Mucosa of descending colon (tissue), 3 donors: ENCODE measurements at regions of chr5 and their contacts with region 1.

Region 1: GRCh38 chr5:179907570-179908324 is at the start of gene TBC1D9B:
- DNase-seq: peak; percentile 57 to 82 (median 80)
- ATAC-seq: peak; percentile 96
- H3K4me3 ChIP-seq: peak within 1 kb of the TSS; percentile 32
- H3K4me1 ChIP-seq: peaks cover 6% of the 10 kb centered on the region
- CTCF ChIP-seq: peak; percentile 75
- total RNA-seq, gene TBC1D9B: 115 to 117 (median 116) TPM

Region 2: GRCh38 chr5:179763215-179763945 is 144.4 kb before region 1 on chr5:
- intact Hi-C with region 1: loop called in 1 of 2 experiments (anchors 5 kb)
- DNase-seq: peak in 2 of 3 donors; percentile 49 to 80
- ATAC-seq: peak; percentile 86
- H3K4me3 ChIP-seq: no peak overlapping the region
- H3K4me1 ChIP-seq: peaks cover 26% of the 10 kb centered on the region
- CTCF ChIP-seq: peak; percentile 85